Activated CD4-positive, alpha-beta memory T cell treated with anti-CD3 and anti-CD28 coated beads for 36 hours (primary cell): ENCODE measurements at regions of chr5 and their contacts with region 1.

Region 1: GRCh38 chr5:141636413-141637122 is at the starts of genes HDAC3 and RELL2:
- DNase-seq: peak; percentile 96
- H3K4me3 Mint-ChIP-seq: peak within 1 kb of the TSS; percentile 94
- H3K27ac Mint-ChIP-seq: peak within 1 kb of the TSS; percentile 80
- H3K4me1 Mint-ChIP-seq: peaks cover 47% of the 10 kb centered on the region
- H3K27me3 Mint-ChIP-seq: no peaks in the 10 kb centered on the region
- total RNA-seq, gene HDAC3: 65.2 to 71.5 TPM
- total RNA-seq, gene RELL2: 17.8 to 17.9 TPM

Region 2: DNA sequence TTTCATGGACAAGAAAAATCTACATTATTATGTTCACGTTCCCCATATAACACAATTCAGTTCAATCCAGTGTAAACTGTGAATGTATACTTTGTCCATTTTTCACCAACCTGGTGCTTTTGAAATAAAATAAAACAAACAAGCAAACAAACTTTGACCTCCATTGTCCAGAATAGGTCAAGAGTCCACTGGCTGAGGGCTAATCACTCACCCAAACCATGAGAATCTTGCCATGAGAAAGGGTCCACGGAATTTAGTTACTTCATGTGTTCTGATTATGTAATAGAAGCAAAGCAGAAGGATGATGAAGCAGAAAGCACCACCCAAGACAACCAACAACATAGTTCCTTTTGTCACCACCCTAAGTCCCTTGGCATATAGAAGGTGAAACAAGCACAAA is 46.4 kb before region 1 on chr5:
- CTCF ChIA-PET with region 1: interaction called, 120 read pairs
- POLR2A ChIA-PET with region 1: interaction called, 11 read pairs
- intact Hi-C with region 1: loop called (anchors 2 kb)
- DNase-seq: no peak
- H3K4me3 Mint-ChIP-seq: no peak overlapping the region
- H3K27ac Mint-ChIP-seq: no peak overlapping the region
- H3K4me1 Mint-ChIP-seq: peaks cover 39% of the 10 kb centered on the region
- H3K27me3 Mint-ChIP-seq: no peaks in the 10 kb centered on the region

Region 3: GRCh38 chr5:141598391-141599350 is 37.9 kb before region 1 on chr5:
- CTCF ChIA-PET with region 1: interaction called, 120 read pairs
- POLR2A ChIA-PET with region 1: interaction called, 10 read pairs
- intact Hi-C with region 1: loop called (anchors 2 kb)
- DNase-seq: no peak
- H3K4me3 Mint-ChIP-seq: no peak overlapping the region
- H3K27ac Mint-ChIP-seq: peak overlapping the region; percentile 84
- H3K4me1 Mint-ChIP-seq: peaks cover 73% of the 10 kb centered on the region
- H3K27me3 Mint-ChIP-seq: no peaks in the 10 kb centered on the region

Region 4: GRCh38 chr5:141605523-141606277 is 30.9 kb before region 1 on chr5:
- CTCF ChIA-PET with region 1: interaction called, 10 read pairs
- POLR2A ChIA-PET with region 1: interaction called, 3 read pairs
- intact Hi-C with region 1: loop called (anchors 1 kb)
- DNase-seq: peak; percentile 80
- H3K4me3 Mint-ChIP-seq: peak overlapping the region; percentile 76
- H3K27ac Mint-ChIP-seq: peak overlapping the region; percentile 97
- H3K4me1 Mint-ChIP-seq: peaks cover 81% of the 10 kb centered on the region
- H3K27me3 Mint-ChIP-seq: no peaks in the 10 kb centered on the region

Region 5: DNA sequence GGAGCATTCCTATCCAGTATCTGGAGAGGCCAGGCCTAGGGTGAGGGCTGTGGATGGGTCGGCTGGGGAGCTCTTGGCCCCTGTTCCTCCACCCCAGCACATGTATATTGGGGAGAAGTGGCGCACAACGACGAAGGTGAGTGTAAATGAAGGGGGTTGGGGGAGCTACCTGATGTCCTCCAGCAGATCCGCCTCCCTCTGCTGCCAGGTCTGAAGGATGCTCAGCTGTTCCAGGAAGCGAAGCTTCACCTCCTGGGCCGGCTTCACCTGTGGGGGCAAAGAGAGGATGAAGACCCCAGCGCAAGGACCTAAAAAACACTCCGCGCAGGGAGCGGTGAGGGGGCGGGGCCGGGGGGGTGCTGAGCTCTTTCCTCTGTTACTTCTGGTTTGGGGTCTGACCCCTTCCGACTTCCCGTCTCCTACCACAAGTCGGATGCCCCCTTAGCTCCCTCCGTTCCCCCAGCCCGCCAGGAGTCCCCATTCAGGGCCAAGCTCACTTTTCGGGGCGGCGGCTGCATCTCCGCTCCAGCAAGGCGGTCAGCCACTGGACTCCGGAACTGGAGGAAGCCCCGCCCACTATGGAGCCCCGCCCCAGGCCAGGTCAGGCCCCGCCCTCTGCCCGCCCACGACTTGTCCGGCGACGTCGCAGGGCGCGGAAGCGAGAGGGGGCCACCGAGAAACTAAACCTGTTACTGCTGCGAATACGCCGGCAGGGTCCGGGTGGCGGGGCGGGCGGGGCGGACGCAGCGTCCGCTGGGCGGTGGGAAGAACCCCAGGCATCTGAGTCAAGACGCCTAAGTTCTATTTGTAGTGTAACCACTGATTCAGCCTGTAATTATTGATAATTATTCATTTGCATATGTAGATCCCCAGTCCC is 14.5 kb after region 1 on chr5 and contains the start of gene FCHSD1:
- CTCF ChIA-PET with region 1: interaction called, 8 read pairs
- POLR2A ChIA-PET with region 1: interaction called, 32 read pairs
- intact Hi-C with region 1: loop called (anchors 1 kb)
- DNase-seq: peak; percentile 92
- H3K4me3 Mint-ChIP-seq: peak within 1 kb of the TSS; percentile 96
- H3K27ac Mint-ChIP-seq: peak within 1 kb of the TSS; percentile 89
- H3K4me1 Mint-ChIP-seq: peaks cover 22% of the 10 kb centered on the region
- H3K27me3 Mint-ChIP-seq: no peaks in the 10 kb centered on the region
- total RNA-seq, gene FCHSD1: 40.1 to 46.0 TPM

Region 6: GRCh38 chr5:143516244-143516643 is 1879.7 kb after region 1 on chr5:
- CTCF ChIA-PET with region 1: no interaction called
- POLR2A ChIA-PET with region 1: no interaction called
- intact Hi-C with region 1: no loop called
- DNase-seq: no peak
- H3K4me3 Mint-ChIP-seq: no peak overlapping the region
- H3K27ac Mint-ChIP-seq: no peak overlapping the region
- H3K4me1 Mint-ChIP-seq: peaks cover 4% of the 10 kb centered on the region
- H3K27me3 Mint-ChIP-seq: no peaks in the 10 kb centered on the region